Activated B cell treated with CpG ODN at 0.5 μM for 24 hours (primary cell): ENCODE measurements at regions of chr1 and their contacts with region 1.

Region 1: DNA sequence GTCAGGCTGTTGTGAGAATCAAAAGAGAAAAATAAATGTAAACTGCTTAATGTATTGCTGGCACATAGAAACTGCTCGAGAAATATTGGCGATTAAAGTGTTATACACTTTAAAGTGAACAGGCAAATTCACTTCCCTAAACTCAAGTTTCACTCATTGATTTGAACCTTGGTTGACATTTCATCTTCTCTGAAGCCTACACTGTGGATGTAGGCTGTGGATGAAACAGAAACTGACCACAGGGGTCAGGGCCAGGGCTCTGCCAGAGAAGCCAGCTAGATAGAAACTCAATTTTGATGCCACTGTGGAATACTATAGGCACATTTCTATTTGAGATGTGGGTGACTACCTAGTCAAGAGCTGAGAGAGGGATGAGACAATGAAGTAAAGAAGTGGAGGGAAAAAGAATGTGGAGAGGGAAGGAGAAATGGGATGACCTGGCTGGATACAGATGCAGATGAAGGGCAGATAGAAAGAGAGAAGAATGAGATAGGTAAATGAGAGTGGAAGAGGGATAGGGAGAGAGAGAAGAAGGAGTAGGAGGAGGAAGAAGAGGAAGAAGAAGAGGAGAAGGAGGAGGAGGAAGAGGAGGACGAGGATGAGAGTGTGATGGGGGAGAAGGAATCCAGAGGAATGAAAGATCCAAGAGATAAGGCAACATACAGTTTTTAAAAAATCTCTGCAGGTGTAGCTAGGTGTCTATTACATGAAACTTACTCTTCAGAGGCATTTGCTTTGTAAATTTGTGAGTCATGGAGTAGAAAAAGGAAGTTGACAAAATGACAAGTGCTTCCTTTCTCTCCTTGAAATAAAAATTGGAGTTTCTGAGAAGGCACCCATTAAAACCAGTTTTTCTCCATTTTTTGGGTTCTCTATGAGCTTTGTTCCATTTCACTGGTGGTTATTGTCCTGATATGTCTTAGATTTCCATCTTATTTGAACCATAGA is 17.4 kb upstream of the CD1D start:
- DNase-seq: no peak
- ATAC-seq: peak; percentile 93
- H3K4me3 Mint-ChIP-seq: peak overlapping the region; percentile 68
- H3K27ac Mint-ChIP-seq: peak overlapping the region; percentile 74
- H3K4me1 Mint-ChIP-seq: peaks cover 57% of the 10 kb centered on the region
- H3K27me3 Mint-ChIP-seq: no peaks in the 10 kb centered on the region
- CTCF ChIP-seq: no peak

Region 2: DNA sequence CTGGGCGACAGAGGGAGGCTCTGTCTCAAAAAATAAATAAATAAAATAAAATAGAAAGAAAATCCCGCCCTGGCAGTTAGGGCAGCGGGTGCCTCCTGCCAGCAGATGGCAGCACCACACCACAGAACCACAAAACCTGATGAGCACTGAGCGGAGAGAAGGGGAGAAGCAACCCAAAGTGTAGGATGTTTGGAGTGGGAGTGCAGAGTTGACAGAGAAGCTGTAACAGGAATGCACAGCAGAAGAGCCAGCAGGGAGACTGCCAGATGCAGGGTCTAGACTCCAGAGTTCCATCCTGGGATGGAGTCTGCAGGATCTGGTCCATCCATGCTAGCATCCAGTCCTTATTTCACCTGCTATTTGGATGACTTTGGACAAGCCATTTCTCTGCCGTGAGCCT is 199.6 kb before region 1 on chr1:
- CTCF ChIA-PET with region 1: no interaction called
- POLR2A ChIA-PET with region 1: no interaction called
- intact Hi-C with region 1: no loop called
- DNase-seq: peak; percentile 52
- ATAC-seq: peak; percentile 57
- H3K4me3 Mint-ChIP-seq: no peak overlapping the region
- H3K27ac Mint-ChIP-seq: no peak overlapping the region
- H3K4me1 Mint-ChIP-seq: no peaks in the 10 kb centered on the region
- H3K27me3 Mint-ChIP-seq: peaks cover 22% of the 10 kb centered on the region
- CTCF ChIP-seq: peak; percentile 80

Region 3: GRCh38 chr1:158149577-158150269 is 13.6 kb before region 1 on chr1:
- CTCF ChIA-PET with region 1: interaction called, 6 read pairs
- POLR2A ChIA-PET with region 1: interaction called, 5 read pairs
- intact Hi-C with region 1: loop called (anchors 1 kb)
- DNase-seq: peak; percentile 62
- ATAC-seq: peak; percentile 76
- H3K4me3 Mint-ChIP-seq: peak overlapping the region; percentile 94
- H3K27ac Mint-ChIP-seq: peak overlapping the region; percentile 95
- H3K4me1 Mint-ChIP-seq: peaks cover 60% of the 10 kb centered on the region
- H3K27me3 Mint-ChIP-seq: no peaks in the 10 kb centered on the region
- CTCF ChIP-seq: no peak